H1 (cell line): ENCODE measurements at regions of chr14 and their contacts with region 1.

Region 1: GRCh38 chr14:23588884-23589598 is 10.5 kb upstream of the JPH4 start:
- DNase-seq: peak in 1 of 2 experiments; percentile 87
- H3K4me3 ChIP-seq: no peak overlapping the region
- H3K27ac ChIP-seq: no peak overlapping the region
- H3K4me1 ChIP-seq: peaks cover 0 to 6% (median under 1%) of the 10 kb centered on the region in 4 experiments; a peak in 2 of 7 replicates
- H3K27me3 ChIP-seq: no peaks in the 10 kb centered on the region
- CTCF ChIP-seq: peak; percentile 88 to 95 (median 95)
- EP300 ChIP-seq: no peak
- POLR2A ChIP-seq: no peak
- RAD21 ChIP-seq: peak; percentile 90 to 92

Region 2: GRCh38 chr14:23521785-23522640 is 67.0 kb before region 1 on chr14:
- CTCF ChIA-PET with region 1: no interaction called
- POLR2A ChIA-PET with region 1: no interaction called
- DNase-seq: no peak
- H3K4me3 ChIP-seq: no peak overlapping the region
- H3K27ac ChIP-seq: no peak overlapping the region
- H3K4me1 ChIP-seq: peaks cover 7 to 13% (median 10%) of the 10 kb centered on the region in 4 experiments
- H3K27me3 ChIP-seq: no peaks in the 10 kb centered on the region
- CTCF ChIP-seq: no peak
- EP300 ChIP-seq: no peak
- POLR2A ChIP-seq: no peak
- RAD21 ChIP-seq: no peak

Region 3: DNA sequence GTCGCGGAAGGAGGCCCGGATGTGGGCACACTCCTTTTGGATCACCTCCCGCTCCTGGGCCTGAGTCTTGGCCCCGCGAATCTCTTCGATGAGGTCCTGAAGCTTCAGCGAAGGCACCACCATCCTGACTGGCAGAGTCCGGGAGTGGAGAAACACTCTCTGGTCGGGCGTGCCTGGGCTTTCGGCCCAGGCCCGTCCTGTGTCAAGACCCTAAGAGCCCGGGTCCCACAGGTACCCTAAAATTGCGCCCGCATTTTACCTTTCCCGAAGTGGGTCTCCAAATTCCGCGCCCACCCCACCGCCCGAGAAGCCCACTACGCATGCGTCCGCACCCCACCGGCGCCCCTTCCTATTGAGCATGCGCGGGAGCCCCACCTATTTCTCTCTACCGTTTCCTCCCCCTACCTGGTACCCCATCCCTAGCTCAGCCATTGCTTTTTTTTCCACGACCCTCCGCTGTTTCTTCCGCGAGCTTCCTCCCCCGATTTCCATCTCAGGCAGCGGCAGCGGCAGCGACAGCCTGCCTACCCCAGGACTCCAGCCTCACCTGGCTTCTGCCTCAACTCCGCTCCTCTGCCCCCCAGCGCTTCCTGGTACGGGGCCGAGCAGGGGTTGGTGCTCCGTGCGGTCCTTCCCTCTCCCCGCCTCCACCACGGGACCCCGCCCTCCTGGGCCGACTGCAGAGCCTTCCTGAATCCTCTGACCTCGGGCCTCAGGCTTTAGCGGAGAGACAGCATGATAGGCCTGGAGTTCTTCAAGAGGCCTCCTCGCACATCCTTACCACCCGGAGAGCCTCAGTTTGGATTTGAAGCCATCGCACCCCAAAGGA is 21.6 kb before region 1 on chr14 and contains the start of gene AP1G2:
- CTCF ChIA-PET with region 1: interaction called, 15 read pairs
- POLR2A ChIA-PET with region 1: no interaction called
- DNase-seq: peak in 1 of 2 experiments; percentile 91
- H3K4me3 ChIP-seq: peak within 1 kb of the TSS; percentile 52 to 81 (median 67)
- H3K27ac ChIP-seq: peak within 1 kb of the TSS; percentile 51
- H3K4me1 ChIP-seq: peaks cover 8 to 21% (median 11%) of the 10 kb centered on the region in 4 experiments
- H3K27me3 ChIP-seq: no peaks in the 10 kb centered on the region
- CTCF ChIP-seq: no peak
- EP300 ChIP-seq: no peak
- POLR2A ChIP-seq: peak; percentile 38 to 86
- RAD21 ChIP-seq: no peak
- total RNA-seq, gene AP1G2: 70.1 and 70.9 TPM in 2 replicates

Region 4: GRCh38 chr14:23605931-23606585 is 17.0 kb after region 1 on chr14:
- CTCF ChIA-PET with region 1: interaction called, 12 read pairs
- POLR2A ChIA-PET with region 1: interaction called, 3 read pairs
- DNase-seq: no peak
- H3K4me3 ChIP-seq: no peak overlapping the region
- H3K27ac ChIP-seq: no peak overlapping the region
- H3K4me1 ChIP-seq: no peaks in the 10 kb centered on the region
- H3K27me3 ChIP-seq: no peaks in the 10 kb centered on the region; a peak in 1 of 7 replicates
- CTCF ChIP-seq: no peak
- EP300 ChIP-seq: no peak
- POLR2A ChIP-seq: no peak
- RAD21 ChIP-seq: no peak

Region 5: GRCh38 chr14:23621204-23621931 is 32.3 kb after region 1 on chr14:
- CTCF ChIA-PET with region 1: interaction called, 10 read pairs
- POLR2A ChIA-PET with region 1: no interaction called
- DNase-seq: no peak
- H3K4me3 ChIP-seq: no peak overlapping the region
- H3K27ac ChIP-seq: no peak overlapping the region
- H3K4me1 ChIP-seq: no peaks in the 10 kb centered on the region
- H3K27me3 ChIP-seq: no peaks in the 10 kb centered on the region
- CTCF ChIP-seq: no peak
- EP300 ChIP-seq: no peak
- POLR2A ChIP-seq: no peak
- RAD21 ChIP-seq: no peak

Region 6: GRCh38 chr14:23929822-23930294 is 340.8 kb after region 1 on chr14:
- CTCF ChIA-PET with region 1: interaction called, 10 read pairs
- POLR2A ChIA-PET with region 1: no interaction called
- DNase-seq: peak; percentile 34 to 97
- H3K4me3 ChIP-seq: no peak overlapping the region
- H3K27ac ChIP-seq: no peak overlapping the region
- H3K4me1 ChIP-seq: no peaks in the 10 kb centered on the region
- H3K27me3 ChIP-seq: no peaks in the 10 kb centered on the region
- CTCF ChIP-seq: peak; percentile 86 to 93 (median 92)
- EP300 ChIP-seq: no peak
- POLR2A ChIP-seq: no peak
- RAD21 ChIP-seq: peak; percentile 82 to 84